ENCODE measurements at regions of chr19 and their contacts with region 1.

Region 1: GRCh38 chr19:41449079-41449864 is 6.3 kb downstream of the ERICH4 start:
- DNase-seq: peak; percentile 76
- ATAC-seq: peak; percentile 97
- H3K4me3 Mint-ChIP-seq: peak overlapping the region; percentile 80
- H3K27ac Mint-ChIP-seq: peak overlapping the region; percentile 46
- H3K4me1 Mint-ChIP-seq: peaks cover 23% of the 10 kb centered on the region
- H3K27me3 Mint-ChIP-seq: peaks cover 2% of the 10 kb centered on the region
- CTCF ChIP-seq: peak; percentile 72

Region 2: DNA sequence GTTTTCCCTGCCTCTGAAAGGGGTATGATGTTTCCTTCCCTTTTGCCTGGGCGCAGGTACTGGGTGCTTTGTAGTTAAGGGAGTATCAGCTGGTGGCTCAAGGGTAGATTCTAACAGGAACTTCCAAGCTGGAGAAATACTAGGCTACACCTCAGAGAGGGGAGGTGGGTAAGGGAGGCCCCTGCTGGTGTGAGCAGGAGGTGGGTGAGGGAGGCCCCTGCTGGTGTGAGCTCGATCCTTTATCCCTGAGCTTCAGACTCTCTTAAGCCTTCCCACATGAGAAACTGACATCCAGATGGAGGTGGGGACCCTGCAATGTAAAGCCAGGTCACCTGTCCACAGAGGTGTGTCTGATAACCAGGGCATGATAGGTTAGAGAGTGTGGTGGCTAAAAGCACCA is 426.1 kb before region 1 on chr19:
- CTCF ChIA-PET with region 1: no interaction called
- POLR2A ChIA-PET with region 1: no interaction called
- intact Hi-C with region 1: no loop called
- DNase-seq: no peak
- ATAC-seq: no peak
- H3K4me3 Mint-ChIP-seq: no peak overlapping the region
- H3K27ac Mint-ChIP-seq: no peak overlapping the region
- H3K4me1 Mint-ChIP-seq: no peaks in the 10 kb centered on the region
- H3K27me3 Mint-ChIP-seq: peaks cover 42% of the 10 kb centered on the region
- CTCF ChIP-seq: no peak

Region 3: GRCh38 chr19:41226053-41226873 is 223.0 kb before region 1 on chr19:
- CTCF ChIA-PET with region 1: no interaction called
- POLR2A ChIA-PET with region 1: no interaction called
- intact Hi-C with region 1: no loop called
- DNase-seq: no peak
- ATAC-seq: no peak
- H3K4me3 Mint-ChIP-seq: peak overlapping the region; percentile 66
- H3K27ac Mint-ChIP-seq: no peak overlapping the region
- H3K4me1 Mint-ChIP-seq: peaks cover 12% of the 10 kb centered on the region
- H3K27me3 Mint-ChIP-seq: peaks cover 36% of the 10 kb centered on the region
- CTCF ChIP-seq: no peak

Region 4: DNA sequence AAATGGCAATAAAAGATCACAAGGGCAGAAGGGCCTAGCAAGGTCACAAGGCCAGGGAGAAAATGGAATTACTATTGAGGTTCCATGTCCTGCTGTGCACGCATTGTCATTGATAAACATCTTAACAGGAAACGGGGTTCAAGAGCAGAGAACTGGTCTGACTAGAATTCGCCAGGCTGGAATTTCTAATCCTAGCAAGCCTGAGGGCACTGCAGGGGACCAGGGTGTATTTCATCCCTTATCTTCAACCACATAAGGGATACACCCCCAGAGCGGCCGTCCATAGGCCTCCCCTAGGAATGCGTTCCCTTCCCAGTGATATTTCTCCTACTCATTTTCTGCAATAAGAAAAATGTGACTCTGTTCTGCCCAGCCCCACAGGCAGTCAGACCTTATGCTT is 13.2 kb after region 1 on chr19:
- CTCF ChIA-PET with region 1: interaction called, 3 read pairs
- POLR2A ChIA-PET with region 1: no interaction called
- intact Hi-C with region 1: loop called (anchors 2 kb)
- DNase-seq: no peak
- ATAC-seq: no peak
- H3K4me3 Mint-ChIP-seq: peak overlapping the region; percentile 7
- H3K27ac Mint-ChIP-seq: peak overlapping the region; percentile 93
- H3K4me1 Mint-ChIP-seq: peaks cover 31% of the 10 kb centered on the region
- H3K27me3 Mint-ChIP-seq: peaks cover 16% of the 10 kb centered on the region
- CTCF ChIP-seq: no peak

Region 5: DNA sequence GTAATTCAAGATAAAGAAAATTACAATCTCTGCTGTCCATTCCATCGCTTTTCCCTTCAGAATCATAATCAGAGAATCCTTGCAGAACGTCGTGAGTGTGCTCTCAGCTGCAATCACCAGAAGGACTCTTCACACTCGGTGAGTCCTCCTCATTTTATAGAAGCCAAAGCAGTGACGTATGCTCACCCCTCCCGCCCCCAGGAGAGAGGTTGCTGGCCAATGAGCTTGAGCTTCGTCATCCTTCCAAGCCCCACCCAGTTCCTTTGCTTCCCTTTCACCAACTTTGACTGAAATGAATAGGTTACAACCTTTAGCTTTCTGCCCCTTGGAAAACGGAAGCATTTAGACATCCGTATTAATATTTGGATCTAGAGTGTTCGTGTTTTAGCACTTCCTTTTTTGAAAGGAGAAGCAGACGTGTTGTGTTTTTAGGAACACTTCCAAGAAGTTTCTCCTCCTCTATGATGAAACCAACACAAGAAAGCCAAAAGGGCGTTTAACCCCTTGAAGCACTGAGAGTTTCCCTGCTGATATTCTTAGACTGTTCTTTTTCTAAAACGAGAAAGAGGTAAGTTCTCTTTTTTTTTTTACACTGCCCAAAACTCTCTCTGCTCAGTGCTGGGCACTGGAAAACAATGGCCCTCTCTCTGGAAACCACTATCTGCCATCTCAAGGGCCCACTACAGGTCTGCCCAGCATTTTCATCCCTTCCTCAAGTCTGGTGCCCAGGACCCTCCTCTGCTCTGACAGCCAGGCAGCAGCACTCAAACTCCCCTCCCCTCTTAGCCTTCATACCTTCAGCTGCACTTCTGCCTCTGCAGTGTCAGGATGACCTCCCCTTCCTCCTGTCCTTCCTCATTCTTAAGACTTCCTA is 82.4 kb after region 1 on chr19:
- CTCF ChIA-PET with region 1: interaction called, 93 read pairs
- POLR2A ChIA-PET with region 1: interaction called, 9 read pairs
- intact Hi-C with region 1: loop called (anchors 1 kb)
- DNase-seq: peak; percentile 64
- ATAC-seq: peak; percentile 78
- H3K4me3 Mint-ChIP-seq: peak overlapping the region; percentile 76
- H3K27ac Mint-ChIP-seq: peak overlapping the region; percentile 86
- H3K4me1 Mint-ChIP-seq: peaks cover 84% of the 10 kb centered on the region
- H3K27me3 Mint-ChIP-seq: no peaks in the 10 kb centered on the region
- CTCF ChIP-seq: no peak

Region 6: DNA sequence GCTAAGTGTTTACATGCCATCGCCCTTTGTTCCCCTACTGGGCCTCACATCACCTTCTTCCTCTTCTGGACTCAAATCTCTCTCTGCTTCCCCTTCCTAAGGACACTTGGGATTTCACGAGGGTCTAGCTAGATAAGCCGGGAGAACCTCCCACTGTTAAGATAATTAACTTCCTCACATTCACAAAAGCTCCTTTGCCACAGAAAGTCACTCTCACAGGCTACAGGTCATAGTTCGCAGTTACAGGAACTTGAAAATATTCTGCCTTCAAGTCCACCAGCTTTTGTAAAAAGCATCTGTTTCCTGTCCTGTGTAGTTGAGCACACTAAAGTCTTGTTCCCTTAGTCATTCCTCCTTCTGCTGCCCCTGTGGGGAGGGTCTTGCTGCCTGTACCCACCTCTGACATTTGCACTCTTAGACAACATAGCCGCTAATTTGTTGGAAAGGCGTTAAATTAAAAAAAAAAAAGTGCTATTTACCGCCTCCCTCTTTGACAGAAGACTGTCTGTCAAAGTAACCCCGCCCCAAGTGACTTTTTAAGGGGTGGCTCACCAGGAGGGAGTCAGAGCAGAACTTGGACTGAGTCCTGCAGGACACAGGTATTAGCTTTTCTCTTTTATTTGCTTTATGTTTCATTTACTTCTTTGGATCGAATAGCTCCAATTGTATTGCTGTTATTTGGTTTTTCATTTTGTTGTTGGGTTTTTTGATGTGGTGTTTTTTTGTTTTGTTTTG is 99.8 kb after region 1 on chr19:
- CTCF ChIA-PET with region 1: interaction called, 25 read pairs
- POLR2A ChIA-PET with region 1: interaction called, 4 read pairs
- intact Hi-C with region 1: no loop called
- DNase-seq: no peak
- ATAC-seq: peak; percentile 58
- H3K4me3 Mint-ChIP-seq: peak overlapping the region; percentile 97
- H3K27ac Mint-ChIP-seq: peak overlapping the region; percentile 99
- H3K4me1 Mint-ChIP-seq: peaks cover 92% of the 10 kb centered on the region
- H3K27me3 Mint-ChIP-seq: no peaks in the 10 kb centered on the region
- CTCF ChIP-seq: no peak

Region 7: DNA sequence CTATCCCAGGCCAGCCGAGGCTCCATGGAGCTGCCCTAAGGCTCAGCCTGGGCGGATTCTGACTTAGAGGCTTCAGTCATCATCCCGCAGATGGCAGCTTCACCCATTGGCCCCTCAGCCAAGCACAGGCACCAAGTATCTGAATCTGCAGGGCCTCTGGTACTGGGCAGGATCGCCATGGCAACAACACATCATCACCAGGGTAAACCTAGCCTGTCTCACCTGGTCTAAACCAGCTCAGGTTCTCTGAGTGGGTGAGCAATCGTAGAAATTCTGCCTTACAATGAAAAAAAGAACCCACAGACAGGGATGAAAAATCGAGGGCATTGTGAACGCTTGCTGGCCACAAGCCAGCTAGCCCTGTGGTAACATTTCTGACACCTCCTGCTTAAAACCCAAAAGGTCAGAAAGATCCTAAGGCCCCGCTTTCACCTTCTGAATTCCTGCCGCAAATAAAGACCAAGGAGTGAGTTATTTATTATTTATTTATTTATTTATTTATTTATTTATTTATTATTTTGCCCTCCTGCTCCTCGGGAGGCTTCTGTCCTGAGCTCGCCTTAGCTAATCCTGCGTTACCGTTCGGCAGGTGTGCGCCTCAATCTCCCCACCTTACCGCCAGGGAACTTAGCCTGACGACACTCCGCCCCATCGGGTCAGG is 114.7 kb after region 1 on chr19:
- CTCF ChIA-PET with region 1: interaction called, 344 read pairs
- POLR2A ChIA-PET with region 1: interaction called, 47 read pairs
- intact Hi-C with region 1: loop called (anchors 1 kb)
- DNase-seq: no peak
- ATAC-seq: peak; percentile 51
- H3K4me3 Mint-ChIP-seq: peak overlapping the region; percentile 83
- H3K27ac Mint-ChIP-seq: peak overlapping the region; percentile 53
- H3K4me1 Mint-ChIP-seq: peaks cover 55% of the 10 kb centered on the region
- H3K27me3 Mint-ChIP-seq: peaks cover 9% of the 10 kb centered on the region
- CTCF ChIP-seq: no peak

Region 8: GRCh38 chr19:41597600-41598041 is 148.3 kb after region 1 on chr19:
- CTCF ChIA-PET with region 1: interaction called, 10 read pairs
- POLR2A ChIA-PET with region 1: no interaction called
- intact Hi-C with region 1: loop called (anchors 1 kb)
- DNase-seq: peak; percentile 25
- ATAC-seq: peak; percentile 90
- H3K4me3 Mint-ChIP-seq: no peak overlapping the region
- H3K27ac Mint-ChIP-seq: peak overlapping the region; percentile 75
- H3K4me1 Mint-ChIP-seq: peaks cover 11% of the 10 kb centered on the region
- H3K27me3 Mint-ChIP-seq: peaks cover 3% of the 10 kb centered on the region
- CTCF ChIP-seq: peak; percentile 88

Region 9: GRCh38 chr19:41821003-41821735 is 371.9 kb after region 1 on chr19:
- CTCF ChIA-PET with region 1: no interaction called
- POLR2A ChIA-PET with region 1: no interaction called
- intact Hi-C with region 1: no loop called
- DNase-seq: no peak
- ATAC-seq: peak; percentile 97
- H3K4me3 Mint-ChIP-seq: no peak overlapping the region
- H3K27ac Mint-ChIP-seq: no peak overlapping the region
- H3K4me1 Mint-ChIP-seq: no peaks in the 10 kb centered on the region
- H3K27me3 Mint-ChIP-seq: peaks cover 17% of the 10 kb centered on the region
- CTCF ChIP-seq: no peak